ENCODE measurements at regions of chr19 and their contacts with region 1.

Region 1: GRCh38 chr19:12064590-12065538 is at the start of gene ZNF844:
- DNase-seq: peak; percentile 73
- H3K4me3 Mint-ChIP-seq: peak within 1 kb of the TSS; percentile 75
- H3K27ac Mint-ChIP-seq: peak within 1 kb of the TSS; percentile 68
- H3K4me1 Mint-ChIP-seq: peaks cover 6% of the 10 kb centered on the region
- H3K27me3 Mint-ChIP-seq: no peaks in the 10 kb centered on the region

Region 2: GRCh38 chr19:12092065-12092867 is 27.4 kb after region 1 on chr19:
- CTCF ChIA-PET with region 1: interaction called, 21 read pairs
- DNase-seq: peak; percentile 77
- H3K4me3 Mint-ChIP-seq: peak overlapping the region; percentile 79
- H3K27ac Mint-ChIP-seq: peak overlapping the region; percentile 75
- H3K4me1 Mint-ChIP-seq: peaks cover 21% of the 10 kb centered on the region
- H3K27me3 Mint-ChIP-seq: peaks cover 13% of the 10 kb centered on the region